Panc1 (cell line): ENCODE measurements at regions of chr3 and their contacts with region 1.

Region 1: DNA sequence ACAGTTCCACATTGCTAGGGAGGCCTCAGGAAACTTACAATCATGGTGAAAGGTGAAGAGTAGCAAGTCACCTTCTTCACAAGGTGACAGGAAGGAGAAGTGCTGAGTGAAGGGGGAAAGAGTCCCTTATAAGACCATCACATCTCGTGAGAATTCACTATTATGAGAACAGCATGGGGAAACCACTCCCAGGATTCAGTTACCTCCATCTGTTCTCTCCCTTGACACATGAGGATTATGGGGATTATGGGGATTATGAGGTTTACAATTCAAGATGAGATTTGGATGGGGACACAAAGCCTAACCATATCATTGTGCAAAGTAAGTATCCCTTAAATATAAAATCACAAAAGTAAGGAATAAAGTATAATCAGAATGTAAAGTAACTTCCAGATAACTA is 375.9 kb upstream of the NAALADL2 start:
- DNase-seq: no peak
- ATAC-seq: no peak
- H3K4me3 ChIP-seq: no peak overlapping the region
- H3K27ac ChIP-seq: no peak overlapping the region
- H3K4me1 ChIP-seq: no peaks in the 10 kb centered on the region
- H3K27me3 ChIP-seq: no peaks in the 10 kb centered on the region
- CTCF ChIP-seq: no peak

Region 2: GRCh38 chr3:174540116-174540908 is 57.1 kb after region 1 on chr3:
- CTCF ChIA-PET with region 1: no interaction called
- POLR2A ChIA-PET with region 1: interaction called, 11 read pairs
- in situ Hi-C with region 1: no loop called
- intact Hi-C with region 1: no loop called
- DNase-seq: no peak
- ATAC-seq: no peak
- H3K4me3 ChIP-seq: no peak overlapping the region
- H3K27ac ChIP-seq: no peak overlapping the region
- H3K4me1 ChIP-seq: no peaks in the 10 kb centered on the region
- H3K27me3 ChIP-seq: no peaks in the 10 kb centered on the region
- CTCF ChIP-seq: no peak